HEK293 (cell line): ENCODE measurements at regions of chr9 and their contacts with region 1.

Region 1: GRCh38 chr9:94681508-94681907 is 42.2 kb upstream of the FBP1 start:
- H3K4me3 ChIP-seq: no peak overlapping the region
- H3K27ac ChIP-seq: no peak overlapping the region
- H3K4me1 ChIP-seq: no peaks in the 10 kb centered on the region
- CTCF ChIP-seq: peak; percentile 57; the same call in 1 of the 2 replicates

Region 2: DNA sequence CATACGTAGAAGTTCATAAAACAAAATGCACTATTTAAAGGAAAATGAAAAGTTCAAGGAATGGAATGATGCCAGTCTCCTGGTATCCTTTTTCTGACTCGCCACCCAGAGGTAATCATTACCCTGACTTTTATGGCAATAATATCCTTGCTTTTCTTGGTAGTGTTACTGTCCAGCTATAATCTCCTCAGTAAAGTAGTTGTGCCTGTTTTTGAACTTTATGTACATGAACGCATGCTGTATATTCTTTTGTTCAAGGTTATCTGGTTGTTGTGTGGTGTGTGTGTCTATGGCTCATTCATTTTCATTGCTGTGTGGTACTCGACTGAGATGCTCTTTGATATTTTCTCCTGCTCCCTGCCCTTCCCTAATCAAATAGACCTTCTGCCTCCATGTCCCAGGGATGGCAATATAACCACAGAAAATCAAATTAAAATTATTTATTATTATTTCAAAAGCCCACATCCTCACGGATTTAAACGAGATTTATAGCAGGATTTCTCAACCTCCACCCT is 13.0 kb before region 1 on chr9:
- CTCF ChIA-PET with region 1: interaction called, 29 read pairs
- POLR2A ChIA-PET with region 1: no interaction called
- H3K4me3 ChIP-seq: no peak overlapping the region
- H3K27ac ChIP-seq: no peak overlapping the region
- H3K4me1 ChIP-seq: no peaks in the 10 kb centered on the region
- CTCF ChIP-seq: no peak

Region 3: GRCh38 chr9:94697972-94698581 is 16.6 kb after region 1 on chr9:
- CTCF ChIA-PET with region 1: interaction called, 38 read pairs
- POLR2A ChIA-PET with region 1: interaction called, 3 read pairs
- H3K4me3 ChIP-seq: no peak overlapping the region
- H3K27ac ChIP-seq: no peak overlapping the region
- H3K4me1 ChIP-seq: peaks cover 11% of the 10 kb centered on the region
- CTCF ChIP-seq: no peak

Region 4: DNA sequence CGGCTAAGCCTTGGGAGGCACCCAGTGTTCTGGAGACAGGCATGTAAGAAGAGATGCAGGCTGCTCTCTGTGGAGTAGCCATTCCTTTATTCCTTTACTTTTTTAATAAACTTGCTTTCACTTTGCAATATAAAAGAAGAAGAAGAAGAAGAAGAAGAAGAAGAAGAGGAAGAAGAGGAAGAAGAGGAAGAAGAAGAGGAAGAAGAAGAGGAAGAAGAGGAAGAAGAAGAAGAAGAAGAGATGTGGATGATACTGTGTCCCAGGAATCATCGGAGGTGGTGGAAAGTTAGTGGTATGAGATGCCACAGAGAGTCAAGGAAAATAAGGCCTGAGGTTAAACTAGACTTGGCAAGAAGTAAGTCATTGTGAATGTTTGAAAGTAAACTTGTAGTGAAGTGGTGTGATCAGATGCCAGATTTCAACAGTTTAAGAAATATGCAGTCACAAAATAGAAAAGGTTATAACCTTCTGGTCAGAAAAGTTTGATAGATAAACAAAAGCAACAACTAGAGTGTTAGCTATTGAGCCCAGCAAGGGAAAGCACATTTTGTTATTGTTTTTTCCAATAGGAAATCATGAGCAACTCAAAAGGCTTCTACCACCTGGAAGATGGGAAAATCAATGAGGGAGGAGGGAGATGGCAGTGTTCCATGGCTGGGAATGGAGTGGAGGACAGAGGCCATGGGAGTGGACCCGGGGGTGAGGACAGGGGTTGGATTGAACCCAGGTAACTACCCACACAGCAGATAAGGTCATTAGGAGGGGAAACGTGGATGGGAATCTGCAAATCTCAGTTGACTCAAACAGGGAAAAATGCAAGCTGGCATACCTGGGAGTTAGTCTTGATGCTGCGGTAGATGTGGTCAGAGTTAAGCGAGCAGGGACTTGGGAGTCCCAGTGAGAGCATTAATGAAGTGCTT is 61.8 kb after region 1 on chr9:
- CTCF ChIA-PET with region 1: no interaction called
- POLR2A ChIA-PET with region 1: no interaction called
- H3K4me3 ChIP-seq: no peak overlapping the region
- H3K27ac ChIP-seq: no peak overlapping the region
- H3K4me1 ChIP-seq: peaks cover 13% of the 10 kb centered on the region; the same call in 1 of the 2 replicates
- CTCF ChIP-seq: no peak

Region 5: GRCh38 chr9:94768766-94769165 is 87.3 kb after region 1 on chr9:
- CTCF ChIA-PET with region 1: interaction called, 12 read pairs
- POLR2A ChIA-PET with region 1: no interaction called
- H3K4me3 ChIP-seq: no peak overlapping the region
- H3K27ac ChIP-seq: no peak overlapping the region
- H3K4me1 ChIP-seq: no peaks in the 10 kb centered on the region
- CTCF ChIP-seq: no peak

Region 6: DNA sequence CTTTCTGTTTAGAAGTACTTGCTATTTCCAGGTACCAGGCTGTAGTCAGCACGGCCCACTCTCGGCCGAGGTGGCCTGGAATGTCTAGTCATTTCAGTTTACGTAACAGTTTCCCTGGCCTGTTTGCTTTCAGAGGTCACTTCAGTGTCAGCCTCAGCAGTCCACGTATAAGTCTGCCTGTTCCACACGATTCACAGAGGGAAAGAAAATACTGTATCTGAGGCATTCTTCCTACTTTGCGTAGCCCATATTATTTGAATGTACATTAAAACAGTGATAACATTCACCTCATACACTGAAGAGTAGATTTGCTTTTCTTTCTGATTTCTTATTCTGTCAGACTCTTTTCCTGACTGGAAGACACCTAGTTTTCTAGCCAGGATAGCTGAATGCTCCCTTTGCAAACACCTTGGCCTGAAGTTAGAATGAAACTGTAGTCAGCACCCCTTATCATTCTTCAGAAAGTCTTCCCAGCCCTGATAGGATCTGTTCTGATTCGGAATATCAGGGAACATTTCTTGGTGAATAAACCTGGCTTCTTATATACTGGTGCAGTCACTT is 185.9 kb after region 1 on chr9:
- CTCF ChIA-PET with region 1: interaction called, 11 read pairs
- POLR2A ChIA-PET with region 1: no interaction called
- H3K4me3 ChIP-seq: no peak overlapping the region
- H3K27ac ChIP-seq: peak overlapping the region; percentile 30
- H3K4me1 ChIP-seq: peaks cover 27% of the 10 kb centered on the region
- CTCF ChIP-seq: no peak

Region 7: DNA sequence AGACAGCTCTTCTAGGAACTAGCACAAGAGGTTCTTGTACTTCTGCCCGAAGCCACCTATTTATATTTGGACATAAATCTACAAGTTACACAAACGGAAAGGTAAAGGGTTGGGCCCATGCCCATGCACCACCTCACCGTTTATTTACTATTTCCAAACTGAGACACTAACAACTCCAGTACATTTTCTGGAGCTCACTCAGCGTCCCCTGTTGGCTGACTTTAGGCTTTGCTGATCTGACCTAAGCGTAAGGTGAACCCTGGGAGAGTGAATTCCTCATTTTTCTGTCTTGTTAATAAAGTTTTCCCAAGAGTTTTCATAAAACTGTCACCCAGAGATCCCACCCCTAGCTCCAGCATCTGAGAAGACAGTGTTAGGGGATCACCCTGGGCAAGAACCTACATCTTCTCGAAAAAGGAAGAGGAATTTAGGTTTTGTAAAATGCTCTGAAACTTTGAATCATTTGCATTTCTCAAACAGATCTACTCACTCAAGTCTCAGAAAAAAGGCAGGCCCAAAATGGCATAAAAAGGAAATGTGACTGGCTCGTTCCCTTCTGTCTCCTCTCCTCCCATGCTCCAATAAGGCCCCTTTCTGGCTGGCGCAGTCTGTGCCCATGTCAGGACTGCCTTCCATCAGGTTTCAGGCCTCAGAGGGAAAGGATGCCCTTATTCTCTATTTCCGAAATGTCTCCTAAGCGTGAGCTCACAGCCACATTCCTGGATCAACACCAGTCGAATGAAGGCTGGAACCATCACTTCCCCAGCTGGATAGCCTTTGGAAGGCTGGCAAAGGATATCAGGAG is 434.7 kb after region 1 on chr9:
- CTCF ChIA-PET with region 1: interaction called, 16 read pairs
- POLR2A ChIA-PET with region 1: no interaction called
- H3K4me3 ChIP-seq: no peak overlapping the region
- H3K27ac ChIP-seq: no peak overlapping the region
- H3K4me1 ChIP-seq: no peaks in the 10 kb centered on the region
- CTCF ChIP-seq: no peak

Region 8: DNA sequence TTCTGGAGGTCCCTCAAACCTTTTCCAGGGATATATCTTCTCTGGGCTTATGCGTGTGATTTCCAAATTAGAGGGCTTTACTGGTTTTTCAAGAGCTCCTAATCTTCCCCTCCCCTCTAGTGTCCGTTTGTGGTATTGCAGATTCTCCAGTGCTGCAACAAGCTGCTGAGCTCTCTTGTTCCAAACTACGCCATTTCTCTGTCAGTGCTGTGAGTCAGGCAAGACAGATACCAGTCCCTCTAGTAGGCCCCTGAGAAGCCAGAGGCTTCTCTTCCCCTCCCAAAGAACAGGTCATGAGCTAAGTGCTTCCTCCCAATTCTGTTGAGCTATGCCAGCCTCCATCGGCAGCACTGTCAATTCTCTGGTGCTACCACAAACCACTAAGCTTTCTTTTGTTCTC is 486.5 kb after region 1 on chr9:
- CTCF ChIA-PET with region 1: interaction called, 12 read pairs
- POLR2A ChIA-PET with region 1: no interaction called
- H3K4me3 ChIP-seq: no peak overlapping the region
- H3K27ac ChIP-seq: no peak overlapping the region
- H3K4me1 ChIP-seq: no peaks in the 10 kb centered on the region
- CTCF ChIP-seq: no peak